Aorta (tissue), 5 donors: ENCODE measurements at regions of chr11 and their contacts with region 1.

Region 1: DNA sequence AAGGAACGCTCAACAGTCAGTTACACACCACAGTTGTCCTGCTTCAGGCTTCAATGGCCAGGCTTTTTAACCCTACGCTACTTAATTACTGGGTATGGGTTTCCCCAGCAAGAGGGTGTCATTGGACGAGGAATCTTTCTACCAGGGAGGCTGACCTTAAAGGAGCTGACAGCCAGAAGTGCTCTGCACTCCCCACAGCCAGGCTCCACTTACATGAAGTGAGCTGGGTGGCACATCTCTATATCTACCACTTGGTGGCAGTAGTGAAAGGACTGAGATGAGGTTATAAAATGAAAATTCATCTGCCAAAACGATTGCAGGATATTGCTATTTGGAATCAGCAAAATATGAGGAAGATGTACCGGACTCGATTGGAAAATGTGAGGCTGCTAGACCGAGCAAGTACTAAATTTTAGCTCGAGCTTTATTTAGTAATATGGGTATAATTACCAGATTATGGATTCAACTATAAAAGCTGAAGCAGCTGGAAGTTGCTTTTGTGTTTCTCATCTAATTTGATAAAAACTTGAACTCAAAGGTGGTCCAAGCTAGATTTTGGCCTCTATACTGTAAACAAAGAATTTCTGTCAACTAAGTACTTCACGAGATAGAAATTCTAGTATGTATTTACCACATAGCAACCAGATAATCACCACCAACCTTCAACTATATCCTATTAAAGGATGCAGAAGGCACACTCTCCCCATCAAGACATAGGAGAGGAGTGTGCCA is 53.9 kb upstream of the CEP126 start:
- DNase-seq: no peak
- ATAC-seq: peak; percentile 85
- H3K4me3 ChIP-seq: no peak overlapping the region
- H3K27ac ChIP-seq: no peak overlapping the region
- H3K4me1 ChIP-seq: no peaks in the 10 kb centered on the region
- H3K27me3 ChIP-seq: no peaks in the 10 kb centered on the region

Region 2: GRCh38 chr11:102007567-102008437 is 146.9 kb after region 1 on chr11:
- intact Hi-C with region 1: loop called (anchors 5 kb)
- DNase-seq: no peak
- ATAC-seq: peak; percentile 47
- H3K4me3 ChIP-seq: no peak overlapping the region
- H3K27ac ChIP-seq: no peak overlapping the region
- H3K4me1 ChIP-seq: peaks cover 0 to 3% of the 10 kb centered on the region in 2 donors
- H3K27me3 ChIP-seq: no peaks in the 10 kb centered on the region